Body of pancreas (tissue), 4 donors: ENCODE measurements at regions of chr12 and their contacts with region 1.

Region 1: DNA sequence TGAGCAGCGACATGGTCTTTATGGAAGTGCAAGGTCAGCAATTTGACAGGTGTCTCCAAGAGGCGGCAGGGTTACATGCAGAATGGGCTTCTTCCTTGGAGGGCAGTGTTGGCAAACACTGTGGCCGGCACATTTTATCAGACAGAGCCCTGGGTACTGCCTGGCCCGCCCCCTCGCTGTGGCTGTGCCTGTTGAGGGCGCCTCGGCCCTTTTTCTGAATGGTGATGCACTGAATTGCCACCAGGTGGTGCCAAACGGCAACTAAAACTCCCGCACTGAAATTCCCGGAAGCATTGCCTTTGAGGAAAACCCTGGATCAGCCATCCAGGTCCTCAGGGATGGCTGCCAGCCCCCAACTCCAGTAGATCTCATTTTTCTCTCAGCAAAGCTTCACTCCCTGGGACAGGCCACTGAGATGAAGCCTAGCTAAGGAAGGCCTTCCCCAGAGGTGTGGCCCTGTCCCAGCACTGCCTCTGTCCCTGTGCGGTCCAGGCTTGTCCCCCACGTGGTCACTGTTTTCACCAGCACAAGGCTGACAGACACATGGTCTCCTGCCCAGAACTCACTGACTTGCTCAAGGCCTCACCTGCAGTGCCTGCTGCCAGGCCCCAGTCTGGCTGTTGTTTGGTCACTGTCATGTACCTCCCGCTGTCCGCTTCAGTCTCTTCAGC is 73.6 kb downstream of the TESC start:
- DNase-seq: peak; percentile 80 to 92 (median 89)
- ATAC-seq: peak; percentile 92
- H3K4me3 ChIP-seq: no peak overlapping the region
- H3K27ac ChIP-seq: peak overlapping the region in 3 of 4 donors; percentile 13 to 58 (median 44)
- H3K4me1 ChIP-seq: peaks cover 37% of the 10 kb centered on the region
- H3K27me3 ChIP-seq: no peaks in the 10 kb centered on the region
- CTCF ChIP-seq: peak; percentile 73 to 98 (median 97)
- POLR2A ChIP-seq: no peak

Region 2: DNA sequence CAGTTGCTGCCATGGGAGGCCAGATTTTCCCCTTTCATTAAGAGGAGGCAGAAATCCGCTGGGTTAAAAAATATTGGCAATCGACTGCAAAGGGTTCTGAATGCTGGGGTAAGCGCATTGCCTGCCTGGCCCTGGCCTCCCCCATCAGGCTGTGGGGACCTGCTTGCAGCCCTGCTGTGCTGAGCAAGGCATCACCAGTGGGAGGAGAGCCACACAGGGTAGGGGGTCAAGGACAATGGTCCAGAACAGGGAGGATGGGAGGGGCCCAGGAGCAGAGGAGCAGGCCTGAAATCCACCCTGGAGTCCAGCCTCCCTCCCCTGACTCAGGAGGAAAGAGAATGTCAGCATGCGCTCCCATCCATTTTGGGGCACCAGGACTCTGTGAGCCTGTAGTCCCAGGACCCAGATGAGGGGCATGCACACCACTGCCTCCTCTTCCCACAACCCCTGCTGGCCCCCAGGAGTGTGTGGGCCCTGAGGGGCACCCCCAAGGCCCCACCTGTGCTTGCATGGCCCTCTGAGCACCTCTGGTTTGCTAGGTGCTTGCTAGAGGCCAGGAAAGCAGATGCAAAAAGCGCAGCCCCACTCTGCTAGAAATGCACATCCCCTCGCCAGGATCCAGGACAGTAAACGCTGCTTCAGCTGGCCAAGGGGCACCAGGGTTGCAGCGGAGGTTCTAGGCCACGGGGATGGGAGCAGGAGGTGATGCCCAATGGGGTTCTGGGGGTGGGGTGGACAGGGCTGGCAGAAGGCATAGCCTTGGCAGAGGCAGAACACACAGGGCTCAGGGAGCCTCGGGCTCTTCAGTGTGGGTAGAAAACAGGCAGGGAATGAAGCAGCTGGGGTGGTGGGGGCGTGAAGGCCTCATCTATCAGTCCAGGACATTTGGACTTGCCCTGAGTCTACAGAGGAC is 59.0 kb after region 1 on chr12:
- intact Hi-C with region 1: no loop called
- DNase-seq: peak in 1 of 4 donors; percentile 33
- ATAC-seq: no peak
- H3K4me3 ChIP-seq: no peak overlapping the region
- H3K27ac ChIP-seq: peak overlapping the region; percentile 52 to 86 (median 65)
- H3K4me1 ChIP-seq: peaks cover 71% of the 10 kb centered on the region
- H3K27me3 ChIP-seq: no peaks in the 10 kb centered on the region
- CTCF ChIP-seq: no peak
- POLR2A ChIP-seq: no peak

Region 3: DNA sequence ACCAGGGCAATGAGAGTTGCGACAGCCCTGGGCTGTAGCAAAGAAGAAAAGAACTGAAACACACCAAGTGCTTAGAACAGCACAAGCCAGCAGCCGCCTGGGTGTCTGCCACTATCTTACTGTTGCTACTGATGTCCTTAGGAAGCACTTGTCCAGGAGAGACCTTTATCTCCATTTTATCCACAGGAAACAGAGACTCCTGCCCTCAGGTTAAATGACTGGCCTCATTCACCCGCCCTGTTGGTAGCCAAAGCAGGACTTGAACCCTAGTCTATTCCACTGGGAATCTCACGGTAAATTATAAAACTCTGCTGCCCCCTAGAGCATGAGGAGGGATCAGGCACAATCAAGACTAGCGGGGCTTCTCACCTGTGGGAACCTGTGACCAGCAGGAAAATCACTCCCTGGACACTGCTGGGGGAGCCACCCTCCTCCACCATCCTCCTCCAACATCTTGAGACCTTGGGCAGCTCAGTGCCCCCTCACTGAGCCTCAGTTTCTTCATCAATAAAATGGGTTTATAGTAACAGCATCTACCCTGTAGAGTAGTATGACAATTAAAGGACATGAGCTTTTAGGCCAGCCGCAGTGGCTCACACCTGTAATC is 94.1 kb after region 1 on chr12:
- intact Hi-C with region 1: loop called (anchors 5 kb)
- DNase-seq: peak; percentile 34 to 53 (median 49)
- ATAC-seq: peak; percentile 49
- H3K4me3 ChIP-seq: no peak overlapping the region
- H3K27ac ChIP-seq: no peak overlapping the region
- H3K4me1 ChIP-seq: peaks cover 10% of the 10 kb centered on the region
- H3K27me3 ChIP-seq: no peaks in the 10 kb centered on the region
- CTCF ChIP-seq: peak; percentile 32 to 89 (median 78)
- POLR2A ChIP-seq: no peak